PC-9 (cell line): ENCODE measurements at regions of chr7 and their contacts with region 1.

Region 1: DNA sequence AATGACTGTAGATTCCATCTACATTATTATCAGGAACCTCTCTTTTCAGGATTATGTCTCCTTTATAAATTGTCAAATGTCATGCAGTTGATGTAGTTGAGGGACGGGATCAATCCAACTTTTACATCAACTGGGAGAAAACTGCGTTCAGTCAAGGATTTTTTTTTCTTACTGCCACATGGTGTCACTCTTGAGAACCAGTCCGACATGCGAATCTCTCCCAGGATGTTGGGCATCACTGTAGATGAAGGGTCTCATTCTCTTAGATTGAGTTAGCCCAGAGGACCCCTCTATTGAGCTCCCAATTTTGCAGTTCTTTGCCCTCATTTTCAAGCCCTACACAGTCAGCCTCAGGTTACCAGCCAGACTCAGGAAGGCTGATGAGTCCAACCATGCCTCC is 120.3 kb upstream of the PTPRZ1 start:
- DNase-seq: no peak
- H3K4me3 ChIP-seq: no peak overlapping the region
- H3K27ac ChIP-seq: no peak overlapping the region
- H3K4me1 ChIP-seq: no peaks in the 10 kb centered on the region
- H3K27me3 ChIP-seq: no peaks in the 10 kb centered on the region
- CTCF ChIP-seq: peak; percentile 25; the same call in 1 of the 2 replicates

Region 2: GRCh38 chr7:121372376-121373010 is 380.2 kb before region 1 on chr7:
- CTCF ChIA-PET with region 1: no interaction called
- POLR2A ChIA-PET with region 1: no interaction called
- intact Hi-C with region 1: loop called (anchors 10 kb)
- DNase-seq: no peak
- H3K4me3 ChIP-seq: no peak overlapping the region
- H3K27ac ChIP-seq: peak overlapping the region; percentile 4; the same call in 1 of the 2 replicates
- H3K4me1 ChIP-seq: peaks cover 10% of the 10 kb centered on the region; the same call in 1 of the 2 replicates
- H3K27me3 ChIP-seq: no peaks in the 10 kb centered on the region
- CTCF ChIP-seq: no peak

Region 3: DNA sequence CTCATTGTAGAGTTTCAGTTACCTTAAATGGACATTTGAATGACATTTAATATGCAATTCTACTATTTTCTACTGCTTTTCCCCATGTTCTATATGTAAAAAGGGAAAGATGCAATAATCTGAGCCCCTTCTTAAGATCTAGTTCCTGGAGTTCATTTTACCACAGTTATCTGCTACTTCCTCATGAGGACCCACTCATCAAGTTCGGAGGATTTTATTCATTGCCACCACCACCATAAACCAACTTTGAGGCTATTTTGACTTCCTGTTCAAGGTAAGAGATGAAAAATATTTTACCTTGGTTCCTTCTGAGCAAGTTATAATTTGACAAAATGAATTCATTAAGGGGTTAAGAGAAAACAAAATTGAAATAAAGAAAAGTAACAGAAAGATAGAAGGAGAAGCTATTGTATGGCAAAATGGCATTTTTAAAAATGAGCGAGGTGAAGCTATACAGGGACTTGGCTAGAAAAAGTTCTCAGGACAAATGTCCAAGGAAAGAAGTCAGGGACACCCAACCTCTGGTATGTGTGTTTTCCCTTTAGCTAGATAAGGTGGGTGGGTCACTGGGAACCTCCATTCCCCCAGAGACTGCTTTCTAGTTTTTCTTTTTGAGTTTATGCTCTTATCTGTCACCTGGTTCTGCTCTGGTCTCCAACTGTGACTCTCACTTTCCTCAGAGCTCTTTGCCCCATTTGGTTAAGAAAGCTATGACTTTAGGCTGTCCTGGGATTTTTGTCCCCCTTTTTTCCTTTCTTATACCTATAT is 341.7 kb before region 1 on chr7:
- CTCF ChIA-PET with region 1: no interaction called
- POLR2A ChIA-PET with region 1: no interaction called
- intact Hi-C with region 1: no loop called
- DNase-seq: no peak
- H3K4me3 ChIP-seq: no peak overlapping the region
- H3K27ac ChIP-seq: no peak overlapping the region
- H3K4me1 ChIP-seq: no peaks in the 10 kb centered on the region
- H3K27me3 ChIP-seq: no peaks in the 10 kb centered on the region
- CTCF ChIP-seq: no peak

Region 4: GRCh38 chr7:121871188-121871587 is 118.5 kb after region 1 on chr7:
- CTCF ChIA-PET with region 1: no interaction called
- POLR2A ChIA-PET with region 1: no interaction called
- intact Hi-C with region 1: no loop called
- DNase-seq: no peak
- H3K4me3 ChIP-seq: no peak overlapping the region
- H3K27ac ChIP-seq: no peak overlapping the region
- H3K4me1 ChIP-seq: no peaks in the 10 kb centered on the region
- H3K27me3 ChIP-seq: peaks cover 27% of the 10 kb centered on the region; the same call in 1 of the 2 replicates
- CTCF ChIP-seq: no peak